A673 (cell line): ENCODE measurements at regions of chr4 and their contacts with region 1.

Region 1: DNA sequence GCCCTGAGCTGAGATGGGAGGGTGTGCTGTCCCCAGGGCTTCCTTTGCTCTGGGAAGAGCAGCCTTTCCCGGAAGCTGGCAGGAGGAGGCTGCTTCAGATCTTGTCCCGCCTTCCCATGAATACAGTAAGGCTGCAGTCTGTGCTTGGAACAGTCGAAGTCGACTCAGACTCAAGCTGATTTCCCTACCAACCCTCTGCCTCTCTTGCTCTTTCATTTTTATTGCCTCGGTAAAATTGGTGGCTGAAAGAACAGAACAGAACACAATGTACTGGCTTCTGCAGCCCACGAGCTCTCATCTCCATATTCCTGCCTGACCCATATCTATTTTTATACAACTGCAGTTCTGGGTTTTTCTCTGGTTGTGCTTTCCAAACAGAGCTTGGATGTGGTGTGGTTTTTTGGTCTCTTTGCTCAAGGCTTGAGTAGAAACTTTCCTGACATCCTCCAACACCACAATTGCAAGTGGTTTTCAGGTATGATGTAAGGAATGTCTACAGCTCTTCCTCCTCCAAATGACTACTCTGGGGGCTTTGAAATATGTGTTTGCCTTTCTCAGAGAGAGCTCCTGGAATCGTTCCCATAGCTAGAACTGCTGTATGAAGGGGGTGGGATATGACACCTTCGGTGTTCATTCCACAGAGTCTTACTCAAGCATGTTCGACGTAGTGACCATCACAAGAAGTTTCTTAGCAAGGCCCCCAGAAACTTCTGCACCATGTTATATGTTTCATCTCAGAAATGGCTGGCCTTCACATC is 61.3 kb downstream of the ENPP6 start:
- DNase-seq: no peak
- H3K4me3 ChIP-seq: no peak overlapping the region
- H3K27ac ChIP-seq: no peak overlapping the region
- H3K4me1 ChIP-seq: no peaks in the 10 kb centered on the region
- H3K27me3 ChIP-seq: no peaks in the 10 kb centered on the region
- CTCF ChIP-seq: no peak

Region 2: GRCh38 chr4:183722731-183723560 is 433.4 kb before region 1 on chr4:
- CTCF ChIA-PET with region 1: no interaction called
- POLR2A ChIA-PET with region 1: interaction called, 17 read pairs
- intact Hi-C with region 1: no loop called
- DNase-seq: peak; percentile 27
- H3K4me3 ChIP-seq: peak overlapping the region; percentile 48
- H3K27ac ChIP-seq: no peak overlapping the region
- H3K4me1 ChIP-seq: no peaks in the 10 kb centered on the region
- H3K27me3 ChIP-seq: no peaks in the 10 kb centered on the region
- CTCF ChIP-seq: no peak

Region 3: GRCh38 chr4:184066584-184067300 is 89.6 kb before region 1 on chr4:
- CTCF ChIA-PET with region 1: no interaction called
- POLR2A ChIA-PET with region 1: no interaction called
- intact Hi-C with region 1: no loop called
- DNase-seq: peak; percentile 66
- H3K4me3 ChIP-seq: no peak overlapping the region
- H3K27ac ChIP-seq: no peak overlapping the region
- H3K4me1 ChIP-seq: peaks cover 19% of the 10 kb centered on the region
- H3K27me3 ChIP-seq: no peaks in the 10 kb centered on the region
- CTCF ChIP-seq: no peak